Heart right ventricle (tissue), 16 donors: ENCODE measurements at regions of chr6 and their contacts with region 1.

Region 1: GRCh38 chr6:41367700-41368099 is 32.3 kb downstream of the NCR2 start:
- DNase-seq: peak; percentile 25 to 56
- ATAC-seq: peak in 7 of 8 donors; percentile 59 to 80 (median 76)
- H3K4me3 ChIP-seq: no peak overlapping the region
- H3K27ac ChIP-seq: no peak overlapping the region
- H3K4me1 ChIP-seq: peaks cover 0 to 26% (median 16%) of the 10 kb centered on the region in 9 donors
- H3K27me3 ChIP-seq: peaks cover 0 to 96% (median 66%) of the 10 kb centered on the region in 7 donors
- CTCF ChIP-seq: peak; percentile 20 to 76 (median 59)

Region 2: GRCh38 chr6:41325446-41326066 is 42.1 kb before region 1 on chr6:
- intact Hi-C with region 1: no loop called
- DNase-seq: no peak
- ATAC-seq: no peak
- H3K4me3 ChIP-seq: no peak overlapping the region
- H3K27ac ChIP-seq: no peak overlapping the region
- H3K4me1 ChIP-seq: no peaks in the 10 kb centered on the region
- H3K27me3 ChIP-seq: peaks cover 0 to 67% (median 62%) of the 10 kb centered on the region in 7 donors
- CTCF ChIP-seq: no peak

Region 3: GRCh38 chr6:41413250-41413649 is 45.5 kb after region 1 on chr6:
- intact Hi-C with region 1: loop called in 1 of 10 experiments (anchors 5 kb)
- DNase-seq: no peak
- ATAC-seq: peak; percentile 18 to 80 (median 63)
- H3K4me3 ChIP-seq: no peak overlapping the region
- H3K27ac ChIP-seq: peak overlapping the region in 1 of 10 donors; percentile 43
- H3K4me1 ChIP-seq: peaks cover 0 to 6% (median 0%) of the 10 kb centered on the region in 9 donors
- H3K27me3 ChIP-seq: peaks cover 0 to 82% (median 55%) of the 10 kb centered on the region in 7 donors
- CTCF ChIP-seq: peak in 3 of 9 donors; percentile 8 to 22 (median 22)

Region 4: DNA sequence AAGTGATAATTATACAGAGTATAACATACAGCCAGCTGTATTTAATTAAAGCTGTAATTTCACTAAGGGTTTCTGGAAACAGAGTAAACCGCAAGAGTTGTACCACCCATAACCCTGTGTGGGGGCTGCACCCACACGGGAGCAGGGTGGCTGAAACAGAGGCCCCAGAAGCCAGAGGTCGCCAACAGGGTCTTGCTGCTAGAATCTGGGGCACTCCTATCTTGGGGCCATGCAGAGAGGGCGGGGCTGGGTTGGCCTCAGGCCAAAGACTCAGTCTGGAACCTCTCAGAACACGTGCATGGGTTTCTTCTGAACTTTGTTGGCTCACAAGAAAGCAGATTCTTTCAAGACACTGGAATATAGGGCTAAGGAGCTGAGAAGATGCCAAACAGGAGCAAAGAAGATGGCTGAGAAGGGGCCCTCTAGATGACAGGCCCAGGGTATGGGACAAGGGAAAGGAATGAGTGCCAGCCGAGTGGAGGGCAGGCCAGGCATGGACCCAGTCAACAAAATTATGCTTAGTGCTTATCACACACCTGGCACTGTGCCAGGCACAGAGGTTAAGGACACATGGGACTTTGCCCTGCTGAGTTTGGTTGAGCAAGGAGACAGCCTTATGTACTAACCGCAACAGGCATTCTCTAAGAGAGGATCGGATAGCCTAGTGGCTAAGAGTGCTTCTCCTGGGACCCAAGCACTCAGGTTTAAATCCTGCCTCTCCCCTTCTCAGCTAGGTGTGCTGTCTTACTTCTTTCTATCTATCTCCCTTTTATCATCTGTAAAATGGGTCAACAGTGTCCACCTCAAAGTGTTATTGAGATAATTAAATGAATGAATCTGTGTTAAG is 81.9 kb after region 1 on chr6:
- intact Hi-C with region 1: loop called in 2 of 10 experiments (anchors 5 to 10 kb)
- DNase-seq: peak in 1 of 2 donors; percentile 38
- ATAC-seq: peak in 7 of 8 donors; percentile 10 to 32 (median 20)
- H3K4me3 ChIP-seq: no peak overlapping the region
- H3K27ac ChIP-seq: peak overlapping the region in 7 of 10 donors; percentile 8 to 89 (median 84)
- H3K4me1 ChIP-seq: peaks cover 16 to 35% (median 28%) of the 10 kb centered on the region in 9 donors
- H3K27me3 ChIP-seq: peaks cover 0 to 2% (median 0%) of the 10 kb centered on the region in 7 donors
- CTCF ChIP-seq: no peak

Region 5: GRCh38 chr6:41463062-41463930 is 95.6 kb after region 1 on chr6:
- intact Hi-C with region 1: loop called in 3 of 10 experiments (anchors 5 to 10 kb)
- DNase-seq: peak; percentile 74
- ATAC-seq: peak; percentile 85 to 96 (median 91)
- H3K4me3 ChIP-seq: no peak overlapping the region
- H3K27ac ChIP-seq: no peak overlapping the region
- H3K4me1 ChIP-seq: peaks cover 0 to 4% (median 0%) of the 10 kb centered on the region in 9 donors
- H3K27me3 ChIP-seq: peaks cover 0 to 13% (median 4%) of the 10 kb centered on the region in 7 donors
- CTCF ChIP-seq: peak; percentile 45 to 85 (median 76)

Region 6: DNA sequence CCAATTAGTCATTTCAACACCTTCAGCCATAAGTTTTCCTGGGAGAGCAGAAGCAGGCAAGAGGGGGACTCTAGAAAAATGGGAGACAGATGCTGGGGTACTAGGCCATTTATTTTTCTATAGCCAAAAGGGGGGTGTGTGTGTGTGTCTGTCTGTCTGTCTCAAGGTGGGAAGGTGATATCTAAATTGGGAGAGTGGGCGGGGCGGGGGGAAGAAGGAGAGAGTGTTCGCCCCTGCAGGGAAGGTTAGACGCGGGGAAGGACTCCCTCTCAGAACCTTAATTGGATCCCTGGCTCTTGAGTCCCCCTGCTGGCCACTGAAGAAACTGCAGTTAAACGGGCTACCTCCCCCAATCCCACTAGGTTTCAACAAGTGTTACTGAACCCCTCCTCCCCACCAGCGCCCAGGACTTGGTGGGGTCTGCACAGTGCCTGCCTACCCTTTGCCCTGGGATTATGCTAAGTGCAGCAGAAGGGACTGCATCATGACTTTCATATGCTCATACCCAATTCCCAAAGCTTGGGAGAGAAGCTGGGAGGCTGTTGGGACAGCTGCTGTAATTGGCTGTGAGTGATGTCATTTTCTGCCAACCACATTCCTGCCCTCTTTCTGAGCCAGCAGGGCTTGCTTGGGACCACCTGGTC is 224.3 kb after region 1 on chr6:
- intact Hi-C with region 1: loop called (anchors 1 to 5 kb)
- DNase-seq: peak; percentile 72 to 73
- ATAC-seq: peak; percentile 37 to 81 (median 60)
- H3K4me3 ChIP-seq: no peak overlapping the region
- H3K27ac ChIP-seq: no peak overlapping the region
- H3K4me1 ChIP-seq: peaks cover 0 to 8% (median 0%) of the 10 kb centered on the region in 9 donors
- H3K27me3 ChIP-seq: no peaks in the 10 kb centered on the region
- CTCF ChIP-seq: peak; percentile 90 to 97 (median 92)